ENCODE measurements at regions of chr15 and their contacts with region 1.

Region 1: DNA sequence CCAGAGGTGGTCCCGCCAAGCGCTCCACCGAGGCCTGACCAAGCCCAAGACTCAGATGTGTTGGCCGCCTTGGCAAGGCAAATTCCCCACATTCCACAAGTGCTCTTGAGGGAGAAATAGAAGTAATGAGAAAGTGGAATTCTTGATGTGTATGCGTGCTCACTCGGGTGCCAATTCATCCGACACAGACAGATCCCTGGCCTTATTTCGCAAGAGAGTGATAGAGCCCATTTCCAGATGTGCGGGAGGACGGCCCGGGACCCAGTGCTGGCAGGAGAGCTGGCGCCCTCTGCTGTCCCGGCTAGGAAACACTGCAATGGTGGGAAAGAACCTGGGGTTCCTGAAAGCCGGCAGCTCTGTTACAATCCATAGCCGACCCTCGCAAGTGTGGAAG is 76.0 kb downstream of the HMG20A start:
- DNase-seq: peak; percentile 68
- ATAC-seq: peak; percentile 93
- H3K4me3 ChIP-seq: peak overlapping the region; percentile 24 to 61 (median 47); a peak in 4 of 6 replicates
- H3K27ac ChIP-seq: no peak overlapping the region
- H3K4me1 ChIP-seq: peaks cover 27% of the 10 kb centered on the region
- H3K27me3 ChIP-seq: no peaks in the 10 kb centered on the region
- CTCF ChIP-seq: peak; percentile 96
- EP300 ChIP-seq: no peak
- POLR2A ChIP-seq: no peak
- RAD21 ChIP-seq: peak; percentile 91

Region 2: DNA sequence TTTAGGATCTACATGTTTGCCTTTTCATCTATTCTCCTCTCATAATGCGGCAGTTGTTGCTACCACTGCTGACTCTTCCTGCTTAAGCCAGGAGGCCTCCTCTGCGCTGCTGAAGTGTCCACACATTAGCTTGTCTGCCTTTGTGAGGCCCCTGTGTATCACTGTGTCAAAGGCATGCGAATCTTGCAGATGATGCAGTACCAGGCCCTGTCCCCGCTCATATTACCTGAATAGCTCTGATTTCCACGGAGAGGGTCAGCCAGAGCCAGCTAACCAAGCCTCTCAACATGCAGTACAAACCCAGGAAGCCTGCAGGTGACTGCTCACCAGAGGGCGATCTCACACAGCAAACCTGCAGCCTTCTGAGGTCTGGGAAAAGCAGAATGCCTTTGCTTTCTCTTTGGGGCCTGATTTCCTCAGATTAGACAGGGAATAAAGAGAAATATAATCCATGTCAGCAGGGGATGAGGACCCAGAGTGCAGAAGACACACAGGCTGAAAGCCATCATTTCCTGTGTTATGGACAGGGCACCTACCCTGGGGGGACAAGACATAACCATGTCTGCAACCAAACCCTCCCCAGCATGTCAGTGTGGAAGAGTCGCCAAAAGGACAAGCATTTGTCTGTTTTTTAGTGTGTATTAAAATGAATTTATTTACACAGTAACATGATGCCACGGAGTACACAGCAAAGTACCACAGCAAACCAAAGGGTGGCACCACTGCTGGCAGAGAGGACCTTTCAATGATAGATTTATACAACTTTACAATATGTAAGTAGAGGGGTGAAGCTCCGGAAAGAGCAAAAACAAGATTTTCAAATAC is 389.0 kb before region 1 on chr15:
- CTCF ChIA-PET with region 1: interaction called, 10 read pairs
- POLR2A ChIA-PET with region 1: no interaction called
- in situ Hi-C with region 1: no loop called
- intact Hi-C with region 1: loop called (anchors 1 kb)
- DNase-seq: peak; percentile 41
- ATAC-seq: peak; percentile 94
- H3K4me3 ChIP-seq: no peak overlapping the region
- H3K27ac ChIP-seq: no peak overlapping the region
- H3K4me1 ChIP-seq: no peaks in the 10 kb centered on the region; the same call in 1 of the 2 replicates
- H3K27me3 ChIP-seq: no peaks in the 10 kb centered on the region
- CTCF ChIP-seq: peak; percentile 87
- EP300 ChIP-seq: no peak
- POLR2A ChIP-seq: no peak
- RAD21 ChIP-seq: peak; percentile 64

Region 3: GRCh38 chr15:77118882-77119321 is 377.8 kb before region 1 on chr15:
- CTCF ChIA-PET with region 1: interaction called, 19 read pairs
- POLR2A ChIA-PET with region 1: no interaction called
- in situ Hi-C with region 1: loop called (anchors 5 kb)
- intact Hi-C with region 1: loop called (anchors 2 kb)
- DNase-seq: peak; percentile 59
- ATAC-seq: peak; percentile 62; the same call in 2 of the 3 replicates
- H3K4me3 ChIP-seq: no peak overlapping the region
- H3K27ac ChIP-seq: no peak overlapping the region
- H3K4me1 ChIP-seq: 0 out of 2 replicates have a peak, but pooled peaks cover 5% of the 10 kb centered on the region
- H3K27me3 ChIP-seq: no peaks in the 10 kb centered on the region
- CTCF ChIP-seq: peak; percentile 75
- EP300 ChIP-seq: no peak
- POLR2A ChIP-seq: no peak
- RAD21 ChIP-seq: peak; percentile 59; the same call in 1 of the 2 replicates

Region 4: GRCh38 chr15:77186594-77187011 is 310.1 kb before region 1 on chr15:
- CTCF ChIA-PET with region 1: interaction called, 6 read pairs
- POLR2A ChIA-PET with region 1: no interaction called
- in situ Hi-C with region 1: no loop called
- intact Hi-C with region 1: loop called (anchors 1 kb)
- DNase-seq: no peak
- ATAC-seq: peak; percentile 60; the same call in 2 of the 3 replicates
- H3K4me3 ChIP-seq: no peak overlapping the region
- H3K27ac ChIP-seq: no peak overlapping the region
- H3K4me1 ChIP-seq: peaks cover 30% of the 10 kb centered on the region
- H3K27me3 ChIP-seq: no peaks in the 10 kb centered on the region
- CTCF ChIP-seq: peak; percentile 52
- EP300 ChIP-seq: no peak
- POLR2A ChIP-seq: no peak
- RAD21 ChIP-seq: peak; percentile 49; the same call in 1 of the 2 replicates

Measured in HepG2 (cell line).